WTC11 (cell line): ENCODE measurements at regions of chr6 and their contacts with region 1.

Region 1: DNA sequence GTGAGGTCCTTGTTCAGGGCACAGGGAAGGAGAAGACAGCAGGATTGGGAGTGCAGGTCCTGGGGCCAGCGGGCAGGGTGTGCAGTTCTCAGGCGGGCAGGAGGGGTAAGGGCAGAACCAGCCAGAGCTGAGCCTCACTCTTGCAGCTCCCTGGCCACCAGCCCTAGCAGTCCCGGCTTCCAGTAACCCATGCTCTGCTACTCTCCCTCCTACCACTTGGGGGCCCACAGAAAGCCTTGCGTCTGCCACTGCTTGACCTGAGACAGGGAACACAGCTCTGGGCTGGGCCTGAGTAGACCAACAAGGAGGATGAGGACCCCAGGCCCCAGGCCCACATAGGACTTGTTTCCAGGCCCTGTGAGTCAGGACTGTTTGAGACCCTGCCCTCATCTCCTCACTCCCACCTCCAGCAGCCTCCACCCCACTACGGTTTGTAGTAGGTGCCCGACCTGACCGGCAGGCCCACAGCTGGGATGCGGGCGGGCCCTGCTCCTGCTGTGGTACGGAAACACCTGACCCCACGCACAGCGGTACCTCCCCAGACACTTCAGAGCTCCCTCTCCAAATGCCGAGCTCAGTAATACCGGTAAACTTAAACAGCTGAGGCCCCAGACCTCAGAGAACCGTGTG is 39.2 kb downstream of the KCNK5 start:
- DNase-seq: peak; percentile 77
- ATAC-seq: peak; percentile 99
- H3K4me3 Mint-ChIP-seq: no peak overlapping the region
- H3K27ac Mint-ChIP-seq: peak overlapping the region; percentile 69
- H3K4me1 Mint-ChIP-seq: peaks cover 10% of the 10 kb centered on the region
- H3K27me3 Mint-ChIP-seq: no peaks in the 10 kb centered on the region; the same call in 1 of the 2 replicates
- CTCF ChIP-seq: peak; percentile 78

Region 2: DNA sequence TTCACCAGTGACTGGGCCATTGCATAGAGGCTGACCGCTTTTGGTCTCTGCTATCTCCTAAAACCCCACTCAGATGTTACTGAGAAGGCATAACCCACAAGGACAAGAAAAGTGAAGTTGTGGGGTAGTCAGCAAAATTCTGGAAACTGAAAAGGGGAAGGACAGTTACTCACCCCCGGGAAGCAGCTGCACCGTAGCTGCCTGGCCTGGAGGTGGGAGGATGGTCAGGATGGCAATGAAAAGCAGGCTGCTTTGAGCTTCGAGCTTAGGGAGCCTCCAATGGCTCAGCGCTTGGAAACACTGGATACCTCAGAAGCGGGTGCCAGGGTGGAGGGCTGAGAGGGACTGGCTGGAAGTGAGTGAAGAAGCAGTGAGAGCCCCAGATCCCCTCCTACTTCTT is 16.8 kb before region 1 on chr6:
- CTCF ChIA-PET with region 1: interaction called, 45 read pairs
- POLR2A ChIA-PET with region 1: interaction called, 3 read pairs
- DNase-seq: no peak
- ATAC-seq: no peak
- H3K4me3 Mint-ChIP-seq: no peak overlapping the region
- H3K27ac Mint-ChIP-seq: no peak overlapping the region
- H3K4me1 Mint-ChIP-seq: no peaks in the 10 kb centered on the region
- H3K27me3 Mint-ChIP-seq: no peaks in the 10 kb centered on the region; the same call in 1 of the 2 replicates
- CTCF ChIP-seq: no peak

Region 3: GRCh38 chr6:39218873-39219536 is 29.0 kb after region 1 on chr6:
- CTCF ChIA-PET with region 1: interaction called, 26 read pairs
- POLR2A ChIA-PET with region 1: no interaction called
- DNase-seq: no peak
- ATAC-seq: no peak
- H3K4me3 Mint-ChIP-seq: no peak overlapping the region
- H3K27ac Mint-ChIP-seq: peak overlapping the region; percentile 48; the same call in 1 of the 2 replicates
- H3K4me1 Mint-ChIP-seq: peaks cover 92% of the 10 kb centered on the region
- H3K27me3 Mint-ChIP-seq: no peaks in the 10 kb centered on the region
- CTCF ChIP-seq: no peak

Region 4: GRCh38 chr6:39296745-39297640 is 107.0 kb after region 1 on chr6:
- CTCF ChIA-PET with region 1: interaction called, 204 read pairs
- POLR2A ChIA-PET with region 1: no interaction called
- DNase-seq: no peak
- ATAC-seq: no peak
- H3K4me3 Mint-ChIP-seq: no peak overlapping the region
- H3K27ac Mint-ChIP-seq: no peak overlapping the region
- H3K4me1 Mint-ChIP-seq: peaks cover 35% of the 10 kb centered on the region
- H3K27me3 Mint-ChIP-seq: peaks cover 7% of the 10 kb centered on the region
- CTCF ChIP-seq: no peak